ENCODE measurements at regions of chr1 and their contacts with region 1.

Region 1: GRCh38 chr1:208081972-208082371 is 162.2 kb downstream of the PLXNA2 start:
- DNase-seq: no peak
- ATAC-seq: peak in 1 of 4 donors; percentile 31
- H3K4me3 ChIP-seq: no peak overlapping the region
- H3K27ac ChIP-seq: peak overlapping the region in 3 of 12 donors; percentile 5 to 68 (median 57)
- H3K4me1 ChIP-seq: peaks cover 0 to 53% (median 22%) of the 10 kb centered on the region in 12 donors
- H3K27me3 ChIP-seq: no peaks in the 10 kb centered on the region
- CTCF ChIP-seq: peak in 3 of 12 donors; percentile 15 to 30 (median 28)
- POLR2A ChIP-seq: no peak

Region 2: DNA sequence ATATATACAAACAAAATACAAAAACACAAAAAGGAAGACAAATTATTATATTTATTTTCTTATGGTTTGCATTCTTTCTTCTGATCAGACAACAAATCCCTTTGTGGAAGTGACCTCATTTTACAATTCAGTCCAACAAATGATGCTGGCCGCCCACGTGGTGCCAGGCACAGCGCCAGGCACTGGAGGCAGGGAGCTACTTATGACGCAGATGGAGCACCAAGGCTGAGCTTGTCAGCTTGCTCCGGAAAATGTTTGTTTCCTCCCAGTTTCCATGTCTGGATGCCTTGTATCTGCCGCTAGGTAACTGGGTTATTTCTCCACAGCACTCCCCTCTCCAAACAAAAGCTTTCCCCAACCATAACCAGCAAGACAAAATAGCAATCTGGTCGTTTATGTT is 140.3 kb before region 1 on chr1:
- intact Hi-C with region 1: no loop called
- DNase-seq: peak; percentile 83 to 87 (median 87)
- ATAC-seq: peak; percentile 89 to 97 (median 92)
- H3K4me3 ChIP-seq: peak overlapping the region in 7 of 12 donors; percentile 10 to 36 (median 29)
- H3K27ac ChIP-seq: peak overlapping the region; percentile 63 to 94 (median 80)
- H3K4me1 ChIP-seq: peaks cover 0 to 52% (median 10%) of the 10 kb centered on the region in 12 donors
- H3K27me3 ChIP-seq: no peaks in the 10 kb centered on the region
- CTCF ChIP-seq: no peak
- POLR2A ChIP-seq: no peak

Region 3: DNA sequence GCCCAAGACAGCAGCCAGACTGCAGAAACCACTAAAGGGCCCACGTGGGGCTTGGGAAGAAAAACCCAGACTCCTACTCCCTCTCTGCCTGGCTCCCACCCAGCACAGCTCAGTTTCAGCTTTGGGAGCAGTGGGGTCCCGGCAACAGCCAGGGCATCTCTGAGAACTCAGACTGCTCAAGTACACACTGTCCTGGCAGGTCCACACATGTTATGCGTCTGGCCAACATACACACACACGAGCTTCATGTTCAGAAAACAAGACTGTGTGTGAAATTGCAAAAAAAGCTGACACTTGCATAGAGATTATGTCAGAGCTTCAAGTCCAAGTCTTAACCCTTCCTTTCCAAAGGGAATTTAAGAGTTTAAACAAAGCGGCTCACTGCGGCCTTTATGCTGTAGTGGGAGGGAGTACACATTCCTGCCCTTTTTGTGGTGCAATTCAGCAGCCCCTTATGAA is 34.5 kb before region 1 on chr1:
- intact Hi-C with region 1: loop called in 1 of 10 experiments (anchors 5 kb)
- DNase-seq: peak; percentile 63 to 86 (median 79)
- ATAC-seq: peak; percentile 81 to 86 (median 83)
- H3K4me3 ChIP-seq: no peak overlapping the region
- H3K27ac ChIP-seq: peak overlapping the region; percentile 40 to 77 (median 64)
- H3K4me1 ChIP-seq: peaks cover 0 to 27% (median 12%) of the 10 kb centered on the region in 12 donors
- H3K27me3 ChIP-seq: no peaks in the 10 kb centered on the region
- CTCF ChIP-seq: no peak
- POLR2A ChIP-seq: no peak

Region 4: DNA sequence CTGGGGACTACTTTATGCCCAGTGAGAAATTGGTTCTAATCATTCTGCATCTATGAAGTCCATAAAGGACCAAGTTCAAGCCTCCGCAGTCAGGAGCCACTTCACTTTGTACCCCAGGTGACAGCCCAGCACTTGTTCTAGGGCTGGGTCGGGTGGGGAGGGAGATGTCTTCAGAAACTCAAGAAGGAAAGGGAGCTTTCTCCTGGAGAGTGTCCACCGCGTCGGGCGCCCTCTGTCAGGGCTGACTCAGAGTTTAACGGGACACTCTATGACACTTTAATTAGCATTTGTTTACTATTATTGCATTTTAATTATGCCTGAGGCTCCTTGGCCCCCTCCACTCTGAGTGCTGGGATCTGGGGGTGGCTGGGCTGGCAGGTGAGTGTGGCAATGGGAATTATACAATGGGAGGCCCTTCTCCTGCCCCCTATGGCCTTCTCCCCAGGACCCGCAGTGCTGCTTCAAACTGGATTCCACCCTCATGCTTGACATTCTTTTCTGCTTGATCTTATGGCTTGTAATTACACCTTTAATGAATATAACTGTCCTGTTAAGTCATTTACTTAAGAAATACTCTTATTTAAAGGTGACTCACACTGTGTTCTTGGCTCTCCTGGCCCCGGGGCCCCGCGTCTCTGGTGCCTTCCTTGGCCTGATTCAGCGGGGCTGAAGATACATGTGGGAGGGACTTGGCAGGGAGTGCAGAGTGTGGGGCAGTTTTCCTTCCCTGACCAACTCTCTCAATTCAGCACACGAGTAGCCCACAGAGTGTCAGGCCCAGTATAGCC is 25.6 kb after region 1 on chr1:
- intact Hi-C with region 1: loop called in 1 of 10 experiments (anchors 2 kb)
- DNase-seq: no peak
- ATAC-seq: peak in 1 of 4 donors; percentile 37
- H3K4me3 ChIP-seq: no peak overlapping the region
- H3K27ac ChIP-seq: no peak overlapping the region
- H3K4me1 ChIP-seq: peaks cover 0 to 25% (median 5%) of the 10 kb centered on the region in 12 donors
- H3K27me3 ChIP-seq: no peaks in the 10 kb centered on the region
- CTCF ChIP-seq: no peak
- POLR2A ChIP-seq: no peak

Region 5: DNA sequence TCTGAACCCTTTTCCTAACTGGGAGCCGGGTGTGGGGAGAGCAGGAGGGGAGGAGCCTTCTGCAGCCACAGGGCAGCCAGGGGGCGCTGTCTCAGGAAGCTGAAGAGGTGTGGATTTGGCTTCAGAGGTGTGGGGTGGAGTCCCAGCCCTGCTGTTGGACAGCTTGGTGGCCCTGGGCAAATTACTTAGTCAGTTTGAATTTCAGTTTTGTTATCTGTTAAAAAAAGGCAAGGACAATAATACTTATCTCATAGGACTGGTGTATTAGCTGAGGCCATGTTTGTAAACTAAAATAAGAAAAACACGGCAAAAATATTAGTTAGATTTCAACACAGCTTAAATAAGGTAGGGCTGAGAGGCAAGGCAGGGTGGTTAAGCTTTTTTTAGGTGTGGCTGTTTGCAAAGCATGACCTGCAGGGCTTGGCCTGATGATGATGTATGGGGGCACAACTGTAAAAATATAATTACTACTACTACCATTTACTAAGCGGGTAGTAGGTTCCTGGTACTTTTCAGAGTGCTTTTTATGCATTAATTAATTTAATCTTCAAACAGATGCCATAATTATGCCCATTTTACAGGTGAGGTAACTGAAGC is 50.4 kb after region 1 on chr1:
- intact Hi-C with region 1: loop called in 1 of 10 experiments (anchors 10 kb)
- DNase-seq: peak; percentile 78 to 89 (median 82)
- ATAC-seq: peak; percentile 82 to 93 (median 90)
- H3K4me3 ChIP-seq: no peak overlapping the region
- H3K27ac ChIP-seq: peak overlapping the region in 1 of 12 donors; percentile 8
- H3K4me1 ChIP-seq: peaks cover 0 to 67% (median 12%) of the 10 kb centered on the region in 12 donors
- H3K27me3 ChIP-seq: no peaks in the 10 kb centered on the region
- CTCF ChIP-seq: peak; percentile 74 to 94 (median 84)
- POLR2A ChIP-seq: no peak